MCF 10A (cell line): ENCODE measurements at regions of chr2 and their contacts with region 1.

Region 1: GRCh38 chr2:240851078-240851991 is 17.3 kb upstream of the AGXT start:
- DNase-seq: peak; percentile 80
- H3K4me3 Mint-ChIP-seq: no peak overlapping the region
- H3K27ac Mint-ChIP-seq: no peak overlapping the region
- H3K4me1 Mint-ChIP-seq: no peaks in the 10 kb centered on the region
- H3K27me3 Mint-ChIP-seq: no peaks in the 10 kb centered on the region
- CTCF ChIP-seq: peak; percentile 96

Region 2: DNA sequence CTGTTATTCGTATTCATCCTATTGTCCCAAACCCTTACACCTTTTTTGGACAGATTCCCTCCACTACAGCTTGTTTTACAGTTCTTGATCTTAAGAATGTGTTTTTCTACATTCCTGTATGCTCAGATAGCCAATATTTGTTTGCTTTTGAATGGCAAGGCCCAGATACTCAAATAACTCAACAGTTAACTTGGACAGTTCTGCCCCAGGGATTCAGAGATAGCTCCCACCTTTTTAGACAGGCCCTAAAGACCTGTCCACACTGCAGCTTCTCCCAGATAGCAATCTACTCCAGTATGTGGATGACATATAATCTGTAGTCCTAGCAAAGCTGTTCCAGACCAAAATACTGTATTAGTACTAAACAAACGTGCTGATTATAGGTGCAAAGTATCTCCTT is 10.2 kb after region 1 on chr2:
- CTCF ChIA-PET with region 1: interaction called, 25 read pairs
- POLR2A ChIA-PET with region 1: interaction called, 3 read pairs
- intact Hi-C with region 1: no loop called
- DNase-seq: no peak
- H3K4me3 Mint-ChIP-seq: no peak overlapping the region
- H3K27ac Mint-ChIP-seq: no peak overlapping the region
- H3K4me1 Mint-ChIP-seq: peaks cover 5% of the 10 kb centered on the region
- H3K27me3 Mint-ChIP-seq: peaks cover 11% of the 10 kb centered on the region
- CTCF ChIP-seq: no peak

Region 3: GRCh38 chr2:240991373-240992263 is 140.3 kb after region 1 on chr2:
- CTCF ChIA-PET with region 1: interaction called, 10 read pairs
- POLR2A ChIA-PET with region 1: no interaction called
- intact Hi-C with region 1: no loop called
- DNase-seq: peak; percentile 96
- H3K4me3 Mint-ChIP-seq: peak overlapping the region; percentile 46
- H3K27ac Mint-ChIP-seq: peak overlapping the region; percentile 91
- H3K4me1 Mint-ChIP-seq: peaks cover 25% of the 10 kb centered on the region
- H3K27me3 Mint-ChIP-seq: no peaks in the 10 kb centered on the region
- CTCF ChIP-seq: no peak

Region 4: DNA sequence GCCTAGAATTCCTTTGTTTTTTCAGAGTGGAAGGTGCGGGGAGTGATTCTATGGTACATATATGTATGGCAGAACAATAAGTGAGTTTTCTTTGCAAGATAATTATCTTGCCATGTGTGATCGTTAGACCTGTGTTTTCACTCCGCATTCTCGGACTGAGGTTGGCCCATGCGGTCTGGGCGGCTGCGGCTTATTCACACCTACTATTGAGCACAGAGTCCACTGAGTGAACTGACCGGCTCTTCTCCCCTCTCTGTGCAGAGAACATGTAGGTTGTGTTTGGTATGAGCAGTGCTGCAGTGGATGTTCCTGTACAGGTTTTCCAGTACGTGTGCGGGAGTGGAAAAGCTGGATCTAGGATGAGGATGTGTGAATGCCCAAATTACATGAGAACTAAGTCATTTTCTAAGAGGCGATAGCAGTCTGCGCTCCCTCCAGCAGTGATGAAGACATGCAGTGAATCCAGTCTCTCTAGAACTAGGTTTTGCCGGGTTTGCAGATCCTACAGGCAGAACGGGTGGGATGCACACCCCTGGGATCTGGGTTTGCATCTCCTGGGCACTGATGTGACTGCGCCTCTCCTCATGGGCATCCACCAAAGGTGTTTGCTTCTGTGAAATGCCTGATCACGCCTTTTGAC is 223.7 kb after region 1 on chr2:
- CTCF ChIA-PET with region 1: interaction called, 3 read pairs
- POLR2A ChIA-PET with region 1: interaction called, 3 read pairs
- intact Hi-C with region 1: loop called (anchors 5 kb)
- DNase-seq: no peak
- H3K4me3 Mint-ChIP-seq: no peak overlapping the region
- H3K27ac Mint-ChIP-seq: no peak overlapping the region
- H3K4me1 Mint-ChIP-seq: no peaks in the 10 kb centered on the region
- H3K27me3 Mint-ChIP-seq: no peaks in the 10 kb centered on the region
- CTCF ChIP-seq: no peak

Region 5: GRCh38 chr2:241149925-241150659 is 298.8 kb after region 1 on chr2 and contains the start of gene PPP1R7:
- CTCF ChIA-PET with region 1: interaction called, 3 read pairs
- POLR2A ChIA-PET with region 1: interaction called, 3 read pairs
- intact Hi-C with region 1: loop called (anchors 5 kb)
- DNase-seq: peak; percentile 94
- H3K4me3 Mint-ChIP-seq: peak within 1 kb of the TSS; percentile 95
- H3K27ac Mint-ChIP-seq: peak within 1 kb of the TSS; percentile 79
- H3K4me1 Mint-ChIP-seq: peaks cover 30% of the 10 kb centered on the region
- H3K27me3 Mint-ChIP-seq: no peaks in the 10 kb centered on the region
- CTCF ChIP-seq: no peak
- total RNA-seq, gene PPP1R7: 38.9 and 43.9 TPM in 2 replicates

Region 6: GRCh38 chr2:241217320-241218031 is 366.1 kb after region 1 on chr2:
- CTCF ChIA-PET with region 1: interaction called, 9 read pairs
- POLR2A ChIA-PET with region 1: no interaction called
- intact Hi-C with region 1: loop called (anchors 10 kb)
- DNase-seq: no peak
- H3K4me3 Mint-ChIP-seq: peak overlapping the region; percentile 74
- H3K27ac Mint-ChIP-seq: peak overlapping the region; percentile 54
- H3K4me1 Mint-ChIP-seq: no peaks in the 10 kb centered on the region
- H3K27me3 Mint-ChIP-seq: peaks cover 17% of the 10 kb centered on the region
- CTCF ChIP-seq: no peak